ENCODE measurements at regions of chr19 and their contacts with region 1.

Region 1: DNA sequence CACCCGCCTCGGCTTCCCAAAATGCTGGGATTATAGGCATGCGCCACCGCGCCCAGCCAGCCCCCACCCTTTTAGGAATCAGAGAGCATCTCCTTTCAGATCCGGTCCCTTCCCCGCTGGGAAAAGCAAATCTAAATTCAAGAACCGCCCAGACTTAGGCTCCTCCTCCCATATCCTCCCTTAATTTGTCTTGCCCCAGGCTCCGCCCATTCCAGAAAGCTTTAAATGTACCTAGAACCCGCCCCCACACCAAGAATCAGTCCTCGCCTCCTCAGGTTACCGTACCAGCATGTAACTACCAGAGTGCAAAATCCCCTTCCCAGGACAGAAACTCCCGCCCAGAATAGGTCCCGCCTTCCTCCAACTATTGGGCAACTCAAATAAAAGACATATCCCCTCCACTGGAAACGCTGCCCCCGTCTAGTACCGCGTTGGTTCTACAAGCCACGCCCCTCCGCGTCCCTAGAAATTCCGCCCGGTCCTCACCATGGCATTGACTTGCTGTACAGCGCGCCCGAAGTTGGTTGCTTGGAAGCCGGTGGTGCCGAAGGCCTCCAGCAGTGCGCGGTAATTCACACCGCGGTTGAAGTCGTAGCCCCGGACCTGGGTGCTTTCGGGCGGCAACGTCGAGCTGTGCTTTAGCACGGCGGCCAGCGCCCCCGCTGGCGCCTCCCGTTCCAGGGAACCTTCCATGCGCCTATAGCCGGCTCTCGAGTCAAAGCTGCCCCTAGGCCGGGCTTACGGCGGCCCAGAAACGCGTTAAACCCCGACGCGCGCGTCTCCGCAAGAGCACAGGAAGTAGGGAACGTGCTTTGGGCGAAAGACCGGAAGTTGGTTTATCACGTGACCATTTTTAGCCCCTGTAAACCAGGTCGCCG is at the start of gene DHPS:
- DNase-seq: peak; percentile 85 to 99 (median 90)
- ATAC-seq: peak; percentile 90
- H3K4me3 ChIP-seq: peak within 1 kb of the TSS; percentile 68
- H3K27ac ChIP-seq: peak within 1 kb of the TSS; percentile 98
- H3K4me1 ChIP-seq: peaks cover 0 to 19% of the 10 kb centered on the region in 2 experiments; a peak in 3 of 5 replicates
- H3K27me3 ChIP-seq: no peaks in the 10 kb centered on the region
- CTCF ChIP-seq: peak in 1 of 3 experiments; percentile 22; a peak in 2 of 6 replicates
- EP300 ChIP-seq: no peak; the same call in 1 of the 2 replicates
- POLR2A ChIP-seq: peak; percentile 94
- RAD21 ChIP-seq: no peak
- polyA plus RNA-seq, gene DHPS: 47.1 to 54.1 TPM

Region 2: DNA sequence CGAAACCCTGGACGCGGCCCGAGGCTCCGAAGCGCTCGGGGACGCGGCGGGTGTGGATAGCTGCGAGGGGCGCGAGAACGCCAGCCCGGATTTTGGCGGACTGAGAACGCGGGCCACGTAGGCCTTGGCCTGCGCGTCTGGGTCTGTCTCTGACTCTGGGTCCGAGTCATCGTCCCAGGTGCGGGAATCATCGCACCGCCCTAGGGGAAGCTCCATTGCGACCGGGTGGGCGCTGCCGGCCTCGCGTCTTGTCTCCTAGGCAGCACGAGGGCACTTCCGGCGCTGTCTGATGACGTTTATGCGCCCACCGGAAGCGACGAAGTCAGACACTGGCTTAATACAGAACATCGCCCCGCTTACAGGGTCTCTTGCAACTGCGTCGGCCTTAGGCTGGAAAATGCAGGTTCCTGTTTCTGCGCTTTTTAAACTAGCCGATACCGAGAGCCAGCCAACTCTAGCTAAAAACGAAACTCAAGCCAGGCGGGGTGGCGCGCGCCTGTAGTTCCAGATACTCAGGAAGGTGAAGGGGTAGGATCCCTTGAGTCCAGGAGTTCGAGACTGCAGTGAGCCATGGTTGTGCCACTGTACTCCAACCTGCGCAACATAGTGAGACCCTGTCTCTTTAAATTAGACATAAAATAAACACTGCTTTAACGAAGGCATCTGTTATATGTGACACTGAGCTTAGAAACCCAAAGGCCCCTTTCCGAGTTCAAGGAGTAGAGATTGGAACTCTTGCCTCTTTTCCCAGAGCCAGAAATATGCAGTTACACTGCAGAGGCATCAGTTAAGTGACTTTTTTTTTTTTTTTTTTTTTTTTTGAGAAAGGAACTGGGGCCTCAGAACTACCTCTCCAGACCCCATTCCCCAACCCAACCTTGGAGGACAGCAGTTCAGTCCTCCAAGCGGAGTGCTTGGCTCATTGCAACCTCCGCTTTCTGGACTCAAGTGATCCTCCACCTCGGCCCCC is 15.3 kb after region 1 on chr19 and contains the start of gene FBXW9:
- CTCF ChIA-PET with region 1: no interaction called
- POLR2A ChIA-PET with region 1: interaction called, 21 read pairs
- in situ Hi-C with region 1: no loop called
- intact Hi-C with region 1: no loop called
- DNase-seq: peak; percentile 88 to 94 (median 89)
- ATAC-seq: peak; percentile 90
- H3K4me3 ChIP-seq: peak within 1 kb of the TSS; percentile 82
- H3K27ac ChIP-seq: peak within 1 kb of the TSS; percentile 69
- H3K4me1 ChIP-seq: peaks cover 0 to 28% of the 10 kb centered on the region in 2 experiments; a peak in 3 of 5 replicates
- H3K27me3 ChIP-seq: no peaks in the 10 kb centered on the region; a peak in 1 of 5 replicates
- CTCF ChIP-seq: no peak
- EP300 ChIP-seq: no peak
- POLR2A ChIP-seq: peak; percentile 85
- RAD21 ChIP-seq: no peak
- polyA plus RNA-seq, gene FBXW9: 0.23 to 1.3 TPM

Region 3: GRCh38 chr19:12708641-12709040 is 27.3 kb after region 1 on chr19:
- CTCF ChIA-PET with region 1: no interaction called
- POLR2A ChIA-PET with region 1: no interaction called
- in situ Hi-C with region 1: no loop called
- intact Hi-C with region 1: no loop called
- DNase-seq: no peak
- ATAC-seq: no peak
- H3K4me3 ChIP-seq: no peak overlapping the region
- H3K27ac ChIP-seq: no peak overlapping the region
- H3K4me1 ChIP-seq: peaks cover 0 to 20% of the 10 kb centered on the region in 2 experiments; a peak in 1 of 5 replicates
- H3K27me3 ChIP-seq: no peaks in the 10 kb centered on the region
- CTCF ChIP-seq: no peak
- EP300 ChIP-seq: no peak
- POLR2A ChIP-seq: no peak
- RAD21 ChIP-seq: no peak

Measured in K562 (cell line).